Prostate gland (tissue), 2 donors: ENCODE measurements at regions of chr3 and their contacts with region 1.

Region 1: GRCh38 chr3:30606301-30607031 is at the start of gene TGFBR2:
- DNase-seq: peak; percentile 86
- H3K4me3 ChIP-seq: peak within 1 kb of the TSS; percentile 90 to 98
- H3K27ac ChIP-seq: peak within 1 kb of the TSS; percentile 91 to 92
- H3K4me1 ChIP-seq: no peaks in the 10 kb centered on the region
- H3K27me3 ChIP-seq: no peaks in the 10 kb centered on the region
- CTCF ChIP-seq: peak in 2 of 4 experiments; percentile 32 to 53
- POLR2A ChIP-seq: peak; percentile 80
- total RNA-seq, gene TGFBR2: 53.0 to 69.6 TPM

Region 2: DNA sequence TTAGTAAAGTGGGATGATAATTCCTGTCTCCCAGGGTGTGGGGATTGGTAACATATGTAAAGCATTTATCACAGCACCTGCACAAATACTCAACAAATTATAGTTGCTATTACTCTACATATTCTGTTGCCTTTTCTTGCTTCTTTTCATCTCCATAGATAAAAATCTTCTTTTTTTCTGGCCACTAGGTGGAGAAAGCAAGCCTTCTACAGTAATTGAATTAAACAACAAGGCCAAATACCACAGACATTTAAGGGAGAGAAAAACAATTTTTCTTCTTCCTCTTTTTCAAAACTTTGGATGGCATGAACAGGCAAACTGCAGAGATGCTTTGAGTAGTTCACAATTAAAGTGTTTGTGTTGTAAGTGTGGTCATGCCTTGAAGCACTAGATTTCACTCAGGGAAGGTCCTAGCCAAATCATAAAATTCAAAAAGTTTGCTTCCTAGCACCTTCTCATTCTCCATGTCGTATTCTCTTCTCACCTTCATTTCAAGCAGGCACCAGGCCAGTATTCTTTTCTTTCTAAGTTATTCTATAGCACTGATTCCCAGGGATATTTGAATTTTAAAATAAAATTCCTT is 493.5 kb before region 1 on chr3:
- intact Hi-C with region 1: loop called (anchors 10 kb)
- DNase-seq: no peak
- H3K4me3 ChIP-seq: no peak overlapping the region
- H3K27ac ChIP-seq: no peak overlapping the region
- H3K4me1 ChIP-seq: no peaks in the 10 kb centered on the region
- H3K27me3 ChIP-seq: no peaks in the 10 kb centered on the region
- CTCF ChIP-seq: peak; percentile 39 to 74 (median 62)
- POLR2A ChIP-seq: no peak

Region 3: DNA sequence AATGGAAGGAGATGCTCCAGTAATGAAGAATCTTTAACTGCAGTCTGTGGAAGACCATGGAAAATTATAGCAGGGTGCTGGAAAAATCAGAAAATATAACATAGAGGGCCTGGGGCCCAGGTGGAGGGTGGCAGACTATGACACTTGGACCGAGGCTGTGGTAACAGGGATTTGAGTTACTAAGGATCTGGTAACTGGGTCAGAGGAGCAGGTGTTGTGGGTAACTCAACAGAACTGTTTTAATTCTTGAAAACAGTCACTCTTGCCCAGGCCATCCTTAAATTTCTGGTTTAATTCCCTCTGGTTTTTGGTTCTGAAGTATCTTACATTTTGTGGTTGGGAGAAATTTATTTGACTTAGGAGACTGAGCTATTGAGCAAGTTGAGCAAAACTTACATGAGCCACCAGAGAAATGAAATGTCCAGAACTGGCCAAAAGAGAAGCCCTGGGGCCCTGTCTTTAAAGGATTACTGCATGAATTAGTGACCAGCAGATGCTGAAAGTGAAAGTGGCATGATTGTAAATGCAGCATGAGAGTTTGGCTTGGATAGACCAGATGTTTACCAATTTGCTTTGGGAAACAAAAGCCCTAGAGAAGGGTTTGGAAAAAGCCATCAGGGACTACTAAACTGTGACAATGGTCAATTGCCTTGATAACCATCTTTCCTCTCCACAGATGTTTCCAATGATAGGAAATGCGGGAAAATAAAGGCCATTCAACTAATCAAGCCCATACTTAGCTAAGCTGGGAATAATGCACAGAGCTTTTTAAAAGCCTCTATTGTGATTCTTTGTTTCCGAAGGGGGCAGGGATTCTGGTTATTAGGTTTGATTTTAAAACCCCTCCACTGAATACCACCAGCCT is 375.0 kb before region 1 on chr3:
- intact Hi-C with region 1: loop called (anchors 10 kb)
- DNase-seq: no peak
- H3K4me3 ChIP-seq: no peak overlapping the region
- H3K27ac ChIP-seq: no peak overlapping the region
- H3K4me1 ChIP-seq: no peaks in the 10 kb centered on the region
- H3K27me3 ChIP-seq: no peaks in the 10 kb centered on the region
- CTCF ChIP-seq: no peak
- POLR2A ChIP-seq: no peak

Region 4: GRCh38 chr3:30370681-30371271 is 235.7 kb before region 1 on chr3:
- intact Hi-C with region 1: no loop called
- DNase-seq: no peak
- H3K4me3 ChIP-seq: no peak overlapping the region
- H3K27ac ChIP-seq: no peak overlapping the region
- H3K4me1 ChIP-seq: no peaks in the 10 kb centered on the region
- H3K27me3 ChIP-seq: no peaks in the 10 kb centered on the region
- CTCF ChIP-seq: no peak
- POLR2A ChIP-seq: no peak

Region 5: DNA sequence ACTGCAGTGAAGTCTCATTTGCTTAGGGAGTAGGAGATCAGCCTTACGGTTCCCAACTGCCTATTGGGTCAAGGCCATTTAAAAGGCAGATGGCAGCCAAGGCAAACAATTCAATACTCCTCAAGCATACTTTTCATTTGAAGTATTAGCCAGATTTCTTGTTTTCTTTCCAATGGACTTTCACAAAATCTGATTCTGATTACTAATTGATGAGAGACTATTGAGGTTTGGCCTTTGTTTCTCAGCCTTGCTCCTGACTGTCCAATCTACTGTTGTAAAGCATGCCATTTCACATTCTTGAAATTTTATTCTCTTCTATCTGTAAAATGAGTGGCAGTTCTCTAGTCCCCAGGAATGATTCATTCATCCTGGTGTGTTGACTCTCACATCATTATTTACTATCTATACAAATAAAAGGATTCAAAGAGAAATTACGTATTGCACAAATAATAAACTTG is 166.3 kb before region 1 on chr3:
- intact Hi-C with region 1: loop called (anchors 5 kb)
- DNase-seq: no peak
- H3K4me3 ChIP-seq: no peak overlapping the region
- H3K27ac ChIP-seq: peak overlapping the region; percentile 12 to 44
- H3K4me1 ChIP-seq: no peaks in the 10 kb centered on the region
- H3K27me3 ChIP-seq: no peaks in the 10 kb centered on the region
- CTCF ChIP-seq: no peak
- POLR2A ChIP-seq: no peak

Region 6: GRCh38 chr3:30511524-30512278 is 94.8 kb before region 1 on chr3:
- intact Hi-C with region 1: loop called (anchors 10 kb)
- DNase-seq: no peak
- H3K4me3 ChIP-seq: no peak overlapping the region
- H3K27ac ChIP-seq: no peak overlapping the region
- H3K4me1 ChIP-seq: no peaks in the 10 kb centered on the region
- H3K27me3 ChIP-seq: no peaks in the 10 kb centered on the region
- CTCF ChIP-seq: no peak
- POLR2A ChIP-seq: no peak

Region 7: DNA sequence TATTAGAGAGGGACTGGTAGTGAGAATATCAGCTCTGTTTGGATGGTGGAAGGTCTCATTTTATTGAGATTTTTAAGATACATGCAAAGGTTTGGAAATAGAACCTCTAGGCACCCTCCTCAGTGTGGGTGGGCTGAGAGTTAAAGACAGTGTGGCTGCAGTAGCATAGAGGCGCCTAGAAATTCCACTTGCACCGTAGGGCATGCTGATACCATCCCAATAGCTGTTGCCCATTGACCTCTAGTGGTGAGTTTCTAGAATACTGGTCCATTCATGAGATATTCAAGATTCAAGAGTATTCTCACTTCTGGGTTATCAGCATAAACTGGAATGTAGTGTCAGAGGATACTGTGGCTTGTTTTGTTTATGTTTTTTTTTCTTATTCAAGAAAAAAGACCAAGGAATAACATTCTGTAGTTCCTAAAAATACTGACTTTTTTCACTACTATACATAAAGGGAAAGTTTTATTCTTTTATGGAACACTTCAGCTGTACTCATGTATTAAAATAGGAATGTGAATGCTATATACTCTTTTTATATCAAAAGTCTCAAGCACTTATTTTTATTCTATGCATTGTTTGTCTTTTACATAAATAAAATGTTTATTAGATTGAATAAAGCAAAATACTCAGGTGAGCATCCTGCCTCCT is 87.1 kb after region 1 on chr3:
- intact Hi-C with region 1: loop called (anchors 2 kb)
- DNase-seq: peak; percentile 53
- H3K4me3 ChIP-seq: no peak overlapping the region
- H3K27ac ChIP-seq: no peak overlapping the region
- H3K4me1 ChIP-seq: peaks cover 6% of the 10 kb centered on the region
- H3K27me3 ChIP-seq: no peaks in the 10 kb centered on the region
- CTCF ChIP-seq: peak; percentile 62 to 83 (median 78)
- POLR2A ChIP-seq: no peak